Gastrocnemius medialis (tissue), 4 donors: ENCODE measurements at regions of chr3 and their contacts with region 1.

Region 1: DNA sequence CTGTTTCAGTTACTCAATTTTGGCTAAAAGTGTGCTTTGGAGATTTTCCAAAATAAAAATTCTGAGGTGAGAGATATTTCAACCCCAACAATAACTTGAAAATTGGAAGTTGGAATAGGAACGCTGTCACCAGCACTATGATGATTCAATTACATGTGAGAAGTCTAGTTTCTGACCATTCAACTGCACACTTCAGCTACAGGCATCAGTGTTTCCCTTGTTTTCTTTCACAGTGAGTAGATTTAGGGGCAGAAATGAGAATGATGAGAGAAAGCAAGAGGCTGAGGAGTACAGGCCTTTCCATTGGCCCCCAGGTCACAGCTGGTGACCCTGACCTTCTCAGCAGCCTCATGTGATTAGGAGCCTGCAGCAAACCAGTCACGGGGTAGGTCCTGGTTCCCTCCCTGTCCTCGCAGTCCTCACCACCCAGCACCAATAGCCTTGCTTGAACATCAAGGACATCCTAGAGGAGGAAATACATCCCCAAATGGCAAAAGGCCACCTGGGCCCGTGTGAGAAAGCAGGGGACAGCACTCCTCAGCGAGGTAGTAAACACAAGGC is 10.0 kb upstream of the FILIP1L start:
- DNase-seq: peak; percentile 78 to 85
- ATAC-seq: peak; percentile 73 to 77
- H3K4me3 ChIP-seq: no peak overlapping the region
- H3K27ac ChIP-seq: peak overlapping the region; percentile 82 to 89 (median 83)
- H3K4me1 ChIP-seq: peaks cover 52 to 58% of the 10 kb centered on the region in 2 donors
- H3K27me3 ChIP-seq: no peaks in the 10 kb centered on the region
- CTCF ChIP-seq: no peak
- POLR2A ChIP-seq: no peak

Region 2: GRCh38 chr3:100002599-100003350 is 121.5 kb before region 1 on chr3:
- in situ Hi-C with region 1: no loop called
- intact Hi-C with region 1: no loop called
- DNase-seq: no peak
- ATAC-seq: no peak
- H3K4me3 ChIP-seq: no peak overlapping the region
- H3K27ac ChIP-seq: peak overlapping the region in 3 of 4 donors; percentile 11 to 30 (median 19)
- H3K4me1 ChIP-seq: peaks cover 31 to 42% of the 10 kb centered on the region in 2 donors
- H3K27me3 ChIP-seq: no peaks in the 10 kb centered on the region
- CTCF ChIP-seq: no peak
- POLR2A ChIP-seq: no peak

Region 3: GRCh38 chr3:100159331-100160153 is 35.3 kb after region 1 on chr3:
- in situ Hi-C with region 1: no loop called
- intact Hi-C with region 1: loop called (anchors 5 kb)
- DNase-seq: no peak
- ATAC-seq: no peak
- H3K4me3 ChIP-seq: peak overlapping the region in 1 of 4 donors; percentile 2
- H3K27ac ChIP-seq: peak overlapping the region; percentile 62 to 79 (median 78)
- H3K4me1 ChIP-seq: peaks cover 54 to 69% of the 10 kb centered on the region in 2 donors
- H3K27me3 ChIP-seq: no peaks in the 10 kb centered on the region
- CTCF ChIP-seq: no peak
- POLR2A ChIP-seq: no peak

Region 4: GRCh38 chr3:100175637-100176280 is 51.5 kb after region 1 on chr3:
- in situ Hi-C with region 1: no loop called
- intact Hi-C with region 1: no loop called
- DNase-seq: no peak
- ATAC-seq: no peak
- H3K4me3 ChIP-seq: no peak overlapping the region
- H3K27ac ChIP-seq: no peak overlapping the region
- H3K4me1 ChIP-seq: peaks cover 0 to 8% of the 10 kb centered on the region in 2 donors
- H3K27me3 ChIP-seq: no peaks in the 10 kb centered on the region
- CTCF ChIP-seq: no peak
- POLR2A ChIP-seq: no peak

Region 5: GRCh38 chr3:100226712-100227429 is 102.6 kb after region 1 on chr3:
- in situ Hi-C with region 1: no loop called
- intact Hi-C with region 1: no loop called
- DNase-seq: no peak
- ATAC-seq: peak; percentile 78 to 87
- H3K4me3 ChIP-seq: no peak overlapping the region
- H3K27ac ChIP-seq: peak overlapping the region in 3 of 4 donors; percentile 6 to 66 (median 35)
- H3K4me1 ChIP-seq: peaks cover 0 to 16% of the 10 kb centered on the region in 2 donors
- H3K27me3 ChIP-seq: no peaks in the 10 kb centered on the region
- CTCF ChIP-seq: no peak
- POLR2A ChIP-seq: no peak